ENCODE measurements at regions of chr1 and their contacts with region 1.

Region 1: DNA sequence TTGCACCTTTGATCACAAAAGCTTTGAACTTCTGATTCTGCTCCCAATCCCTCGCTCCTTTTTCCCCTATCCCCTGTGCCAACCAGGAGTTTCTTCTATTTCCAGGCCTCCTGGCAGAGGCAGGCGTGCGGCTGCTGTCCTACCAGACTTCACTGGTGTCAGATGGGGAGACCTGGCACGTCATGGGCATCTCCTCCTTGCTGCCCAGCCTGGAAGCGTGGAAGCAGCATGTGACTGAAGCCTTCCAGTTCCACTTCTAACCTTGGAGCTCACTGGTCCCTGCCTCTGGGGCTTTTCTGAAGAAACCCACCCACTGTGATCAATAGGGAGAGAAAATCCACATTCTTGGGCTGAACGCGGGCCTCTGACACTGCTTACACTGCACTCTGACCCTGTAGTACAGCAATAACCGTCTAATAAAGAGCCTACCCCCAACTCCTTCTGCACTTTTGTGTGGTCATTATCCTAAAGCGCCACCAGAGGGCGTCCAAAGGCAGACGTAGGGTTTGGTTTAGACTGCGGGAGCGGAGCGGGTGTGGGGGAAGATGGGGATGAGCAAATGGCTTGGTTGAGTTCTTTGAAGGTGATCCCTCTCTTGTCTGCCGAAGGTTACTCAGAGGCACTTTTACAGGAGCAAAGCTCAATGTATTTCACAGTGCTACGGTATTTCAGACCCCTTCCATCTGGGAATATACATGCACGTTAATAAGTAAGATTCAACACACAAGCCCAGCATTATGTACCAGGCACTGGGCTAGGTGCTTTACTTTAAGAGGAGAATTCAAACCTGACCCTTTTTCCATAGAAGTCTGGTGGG is 24.7 kb downstream of the HMGCS2 start:
- H3K4me3 ChIP-seq: no peak overlapping the region
- H3K27ac ChIP-seq: no peak overlapping the region
- H3K4me1 ChIP-seq: no peaks in the 10 kb centered on the region
- CTCF ChIP-seq: peak; percentile 81

Region 2: GRCh38 chr1:119492763-119493162 is 251.2 kb before region 1 on chr1:
- CTCF ChIA-PET with region 1: no interaction called
- POLR2A ChIA-PET with region 1: no interaction called
- H3K4me3 ChIP-seq: no peak overlapping the region
- H3K27ac ChIP-seq: no peak overlapping the region
- H3K4me1 ChIP-seq: no peaks in the 10 kb centered on the region
- CTCF ChIP-seq: no peak

Region 3: DNA sequence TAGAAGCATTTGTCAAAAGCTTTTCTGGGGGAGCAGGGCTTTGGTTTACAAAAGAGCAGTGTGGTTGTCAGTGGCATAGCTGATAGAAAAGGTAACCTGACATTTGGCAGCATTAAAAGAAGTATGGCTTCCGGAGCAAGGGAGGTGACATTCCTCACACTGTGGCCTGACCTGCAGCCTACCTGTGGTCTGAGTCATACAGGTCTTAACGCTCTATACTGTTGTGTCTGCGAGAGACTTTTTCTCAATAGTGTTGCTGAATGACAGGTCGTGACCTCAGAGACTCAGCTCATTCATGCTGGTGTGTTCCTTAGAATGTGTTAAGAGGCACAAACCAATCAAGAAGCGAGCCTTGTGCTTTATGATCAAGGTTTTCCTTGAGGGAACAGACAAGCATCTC is 12.9 kb before region 1 on chr1:
- CTCF ChIA-PET with region 1: interaction called, 12 read pairs
- POLR2A ChIA-PET with region 1: interaction called, 4 read pairs
- H3K4me3 ChIP-seq: no peak overlapping the region
- H3K27ac ChIP-seq: no peak overlapping the region
- H3K4me1 ChIP-seq: no peaks in the 10 kb centered on the region
- CTCF ChIP-seq: no peak

Region 4: GRCh38 chr1:119768778-119769177 is 24.8 kb after region 1 on chr1 and contains the start of gene HMGCS2:
- CTCF ChIA-PET with region 1: interaction called, 10 read pairs
- POLR2A ChIA-PET with region 1: no interaction called
- H3K4me3 ChIP-seq: no peak within 1 kb of the TSS
- H3K27ac ChIP-seq: no peak within 1 kb of the TSS
- H3K4me1 ChIP-seq: peaks cover 10% of the 10 kb centered on the region; the same call in 1 of the 2 replicates
- CTCF ChIP-seq: no peak